Ascending aorta (tissue), 2 donors: ENCODE measurements at regions of chr16 and their contacts with region 1.

Region 1: DNA sequence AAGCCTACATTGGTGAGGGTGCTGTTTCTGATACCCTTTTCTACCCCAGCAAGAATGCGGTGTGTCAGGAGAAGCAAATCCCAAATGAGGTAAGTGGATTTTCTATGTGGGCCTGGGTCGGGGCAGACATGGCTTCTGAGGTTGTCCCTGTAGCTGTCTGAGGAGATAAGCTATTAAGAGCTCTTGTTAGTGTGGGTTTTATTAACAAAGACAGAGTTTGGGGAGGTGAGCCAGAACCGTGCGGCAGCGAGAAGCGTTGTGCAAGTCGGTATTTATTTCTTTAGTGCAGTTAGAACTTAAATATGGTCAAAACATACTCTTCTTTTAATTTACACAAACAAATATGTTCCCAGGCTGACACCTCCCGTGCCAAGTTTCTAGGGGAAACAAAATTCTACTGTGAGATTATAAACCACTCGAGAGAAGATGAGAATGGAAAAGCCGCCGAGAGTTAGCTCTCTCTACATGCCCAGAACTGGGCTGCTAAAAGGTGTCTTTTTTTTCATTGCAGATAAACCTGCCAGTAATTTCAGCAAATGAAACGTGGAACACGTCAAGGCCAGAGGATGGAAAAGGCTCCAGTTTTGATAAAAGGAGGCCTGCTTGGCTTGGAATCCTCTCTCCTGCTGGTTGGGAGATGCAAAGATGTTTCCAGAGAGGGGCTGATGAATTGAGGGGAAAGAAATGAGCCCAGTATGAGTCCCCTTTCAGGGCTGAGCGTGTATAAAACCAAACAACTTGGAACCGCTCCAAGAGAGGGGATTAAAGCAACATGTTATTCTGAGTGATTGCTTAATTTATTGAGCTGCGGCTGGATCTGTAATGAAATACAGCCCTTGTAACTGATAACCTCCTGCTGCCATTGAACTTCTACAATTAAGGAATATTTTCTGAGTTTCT is 254.6 kb downstream of the MRTFB start:
- DNase-seq: no peak
- H3K4me3 ChIP-seq: no peak overlapping the region
- H3K27ac ChIP-seq: peak overlapping the region in 1 of 2 donors; percentile 0
- H3K4me1 ChIP-seq: peaks cover 0 to 8% of the 10 kb centered on the region in 2 donors
- H3K27me3 ChIP-seq: no peaks in the 10 kb centered on the region
- CTCF ChIP-seq: no peak

Region 2: GRCh38 chr16:14309001-14309886 is 16.5 kb before region 1 on chr16:
- intact Hi-C with region 1: loop called (anchors 2 kb)
- DNase-seq: no peak
- H3K4me3 ChIP-seq: no peak overlapping the region
- H3K27ac ChIP-seq: peak overlapping the region; percentile 21 to 37
- H3K4me1 ChIP-seq: peaks cover 10 to 44% of the 10 kb centered on the region in 2 donors
- H3K27me3 ChIP-seq: no peaks in the 10 kb centered on the region
- CTCF ChIP-seq: no peak